B cell (primary cell): ENCODE measurements at regions of chr22 and their contacts with region 1.

Region 1: GRCh38 chr22:35409783-35410662 is 10.1 kb downstream of the MCM5 start:
- DNase-seq: peak; percentile 96
- ATAC-seq: peak; percentile 89
- H3K4me3 ChIP-seq: peak overlapping the region in 3 of 5 experiments; percentile 1 to 45 (median 21)
- H3K4me3 Mint-ChIP-seq: peak overlapping the region; percentile 83
- H3K27ac ChIP-seq: peak overlapping the region; percentile 99
- H3K27ac Mint-ChIP-seq: peak overlapping the region; percentile 96
- H3K4me1 ChIP-seq: peaks cover 31 to 39% of the 10 kb centered on the region in 2 donors
- H3K4me1 Mint-ChIP-seq: peaks cover 53% of the 10 kb centered on the region
- H3K27me3 ChIP-seq: no peaks in the 10 kb centered on the region
- H3K27me3 Mint-ChIP-seq: no peaks in the 10 kb centered on the region
- CTCF ChIP-seq: no peak

Region 2: GRCh38 chr22:35299673-35300497 is 110.1 kb before region 1 on chr22 and contains the start of gene TOM1:
- CTCF ChIA-PET with region 1: interaction called, 13 read pairs
- POLR2A ChIA-PET with region 1: interaction called, 5 read pairs
- intact Hi-C with region 1: loop called (anchors 1 kb)
- DNase-seq: peak; percentile 100
- ATAC-seq: peak; percentile 90
- H3K4me3 ChIP-seq: peak within 1 kb of the TSS; percentile 61 to 94 (median 73)
- H3K4me3 Mint-ChIP-seq: peak within 1 kb of the TSS; percentile 93
- H3K27ac ChIP-seq: peak within 1 kb of the TSS; percentile 96 to 97
- H3K27ac Mint-ChIP-seq: peak within 1 kb of the TSS; percentile 98
- H3K4me1 ChIP-seq: peaks cover 5 to 22% of the 10 kb centered on the region in 2 donors
- H3K4me1 Mint-ChIP-seq: peaks cover 26% of the 10 kb centered on the region
- H3K27me3 ChIP-seq: no peaks in the 10 kb centered on the region
- H3K27me3 Mint-ChIP-seq: no peaks in the 10 kb centered on the region
- CTCF ChIP-seq: no peak
- total RNA-seq, gene TOM1: 53.2 and 54.2 TPM in 2 replicates

Region 3: GRCh38 chr22:35319244-35319985 is 90.6 kb before region 1 on chr22:
- CTCF ChIA-PET with region 1: no interaction called
- POLR2A ChIA-PET with region 1: no interaction called
- intact Hi-C with region 1: no loop called
- DNase-seq: no peak
- ATAC-seq: no peak
- H3K4me3 ChIP-seq: no peak overlapping the region
- H3K4me3 Mint-ChIP-seq: no peak overlapping the region
- H3K27ac ChIP-seq: no peak overlapping the region
- H3K27ac Mint-ChIP-seq: no peak overlapping the region
- H3K4me1 ChIP-seq: peaks cover 3 to 5% of the 10 kb centered on the region in 2 donors
- H3K4me1 Mint-ChIP-seq: peaks cover 7% of the 10 kb centered on the region
- H3K27me3 ChIP-seq: no peaks in the 10 kb centered on the region
- H3K27me3 Mint-ChIP-seq: no peaks in the 10 kb centered on the region
- CTCF ChIP-seq: no peak

Region 4: GRCh38 chr22:35376728-35377472 is 33.1 kb before region 1 on chr22:
- CTCF ChIA-PET with region 1: interaction called, 34 read pairs
- POLR2A ChIA-PET with region 1: interaction called, 11 read pairs
- intact Hi-C with region 1: loop called (anchors 1 kb)
- DNase-seq: peak; percentile 87
- ATAC-seq: peak; percentile 77
- H3K4me3 ChIP-seq: peak overlapping the region in 1 of 5 experiments; percentile 38
- H3K4me3 Mint-ChIP-seq: peak overlapping the region; percentile 79
- H3K27ac ChIP-seq: no peak overlapping the region
- H3K27ac Mint-ChIP-seq: peak overlapping the region; percentile 93
- H3K4me1 ChIP-seq: peaks cover 35 to 46% of the 10 kb centered on the region in 2 donors
- H3K4me1 Mint-ChIP-seq: peaks cover 50% of the 10 kb centered on the region
- H3K27me3 ChIP-seq: peaks cover 0 to 8% (median 0%) of the 10 kb centered on the region in 4 experiments
- H3K27me3 Mint-ChIP-seq: no peaks in the 10 kb centered on the region
- CTCF ChIP-seq: no peak

Region 5: DNA sequence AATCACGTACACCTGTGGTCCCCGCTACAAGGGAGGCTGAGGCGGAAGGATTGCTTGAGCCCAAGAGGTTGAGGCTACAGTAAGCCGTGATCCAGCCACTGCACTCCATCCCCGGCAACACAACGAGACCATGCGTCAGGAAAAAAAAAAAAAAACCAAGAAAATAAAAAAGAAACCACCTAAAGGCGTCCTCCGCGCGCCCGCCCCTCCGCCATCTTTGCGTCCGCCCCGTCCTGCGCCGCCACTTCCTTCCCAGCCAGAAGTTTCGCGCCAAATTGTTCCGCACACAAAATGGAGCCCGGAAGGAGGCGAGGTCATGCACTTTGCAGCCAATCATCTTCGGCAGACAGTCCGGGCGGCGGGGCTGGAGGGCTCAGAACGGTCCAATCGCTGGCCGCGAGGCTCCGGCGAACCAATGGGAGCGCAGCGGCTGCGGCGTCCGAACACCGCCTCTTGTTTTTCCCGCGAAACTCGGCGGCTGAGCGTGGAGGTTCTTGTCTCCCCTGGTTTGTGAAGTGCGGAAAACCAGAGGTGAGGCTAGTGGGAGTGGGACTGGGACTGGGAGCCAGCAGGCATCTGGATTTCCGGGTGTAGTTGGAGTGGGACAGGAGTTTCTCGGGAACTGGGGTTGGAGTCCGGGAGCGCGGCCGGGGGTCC is 10.2 kb before region 1 on chr22 and contains the start of gene MCM5:
- CTCF ChIA-PET with region 1: interaction called, 60 read pairs
- POLR2A ChIA-PET with region 1: interaction called, 28 read pairs
- intact Hi-C with region 1: loop called (anchors 1 kb)
- DNase-seq: peak; percentile 98
- ATAC-seq: peak; percentile 97
- H3K4me3 ChIP-seq: peak within 1 kb of the TSS; percentile 76 to 100 (median 90)
- H3K4me3 Mint-ChIP-seq: peak within 1 kb of the TSS; percentile 98
- H3K27ac ChIP-seq: peak within 1 kb of the TSS; percentile 82 to 92
- H3K27ac Mint-ChIP-seq: peak within 1 kb of the TSS; percentile 98
- H3K4me1 ChIP-seq: peaks cover 35 to 64% of the 10 kb centered on the region in 2 donors
- H3K4me1 Mint-ChIP-seq: peaks cover 50% of the 10 kb centered on the region
- H3K27me3 ChIP-seq: no peaks in the 10 kb centered on the region
- H3K27me3 Mint-ChIP-seq: no peaks in the 10 kb centered on the region
- CTCF ChIP-seq: no peak
- total RNA-seq, gene MCM5: 203 and 221 TPM in 2 replicates

Region 6: GRCh38 chr22:35539910-35540594 is 130.0 kb after region 1 on chr22:
- CTCF ChIA-PET with region 1: no interaction called
- POLR2A ChIA-PET with region 1: interaction called, 3 read pairs
- intact Hi-C with region 1: loop called (anchors 2 kb)
- DNase-seq: peak; percentile 78
- ATAC-seq: peak; percentile 95
- H3K4me3 ChIP-seq: peak overlapping the region in 4 of 5 experiments; percentile 47 to 65 (median 55)
- H3K4me3 Mint-ChIP-seq: peak overlapping the region; percentile 81
- H3K27ac ChIP-seq: no peak overlapping the region
- H3K27ac Mint-ChIP-seq: no peak overlapping the region
- H3K4me1 ChIP-seq: peaks cover 24 to 26% of the 10 kb centered on the region in 2 donors
- H3K4me1 Mint-ChIP-seq: peaks cover 12% of the 10 kb centered on the region
- H3K27me3 ChIP-seq: peaks cover 0 to 61% (median 29%) of the 10 kb centered on the region in 4 experiments
- H3K27me3 Mint-ChIP-seq: peaks cover 46% of the 10 kb centered on the region
- CTCF ChIP-seq: no peak

Region 7: DNA sequence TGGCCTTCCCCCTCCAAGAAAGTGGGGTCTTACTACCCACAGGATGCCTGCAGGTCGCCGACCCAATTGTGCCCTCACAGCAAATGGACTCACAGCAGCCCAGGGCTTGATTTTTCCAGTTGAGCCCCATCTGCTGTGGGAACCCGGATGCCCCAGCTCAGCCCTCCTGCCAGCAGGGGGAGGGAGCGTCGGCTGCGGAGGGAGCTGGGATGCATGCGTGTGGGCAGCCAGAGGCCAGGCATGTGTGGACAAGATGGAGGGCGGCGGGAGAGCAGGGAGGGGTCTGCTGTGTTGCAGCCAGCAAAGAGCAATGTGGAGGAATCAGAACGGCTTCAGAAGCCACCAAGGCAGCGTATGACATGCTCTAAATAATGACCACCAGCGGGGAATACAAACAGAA is 1160.0 kb after region 1 on chr22:
- CTCF ChIA-PET with region 1: no interaction called
- POLR2A ChIA-PET with region 1: no interaction called
- intact Hi-C with region 1: no loop called
- DNase-seq: no peak
- ATAC-seq: no peak
- H3K4me3 ChIP-seq: no peak overlapping the region
- H3K4me3 Mint-ChIP-seq: no peak overlapping the region
- H3K27ac ChIP-seq: no peak overlapping the region
- H3K27ac Mint-ChIP-seq: no peak overlapping the region
- H3K4me1 ChIP-seq: no peaks in the 10 kb centered on the region
- H3K4me1 Mint-ChIP-seq: no peaks in the 10 kb centered on the region
- H3K27me3 ChIP-seq: no peaks in the 10 kb centered on the region
- H3K27me3 Mint-ChIP-seq: peaks cover 18% of the 10 kb centered on the region
- CTCF ChIP-seq: no peak